Esophagus muscularis mucosa (tissue), 4 donors: ENCODE measurements at regions of chr12 and their contacts with region 1.

Region 1: DNA sequence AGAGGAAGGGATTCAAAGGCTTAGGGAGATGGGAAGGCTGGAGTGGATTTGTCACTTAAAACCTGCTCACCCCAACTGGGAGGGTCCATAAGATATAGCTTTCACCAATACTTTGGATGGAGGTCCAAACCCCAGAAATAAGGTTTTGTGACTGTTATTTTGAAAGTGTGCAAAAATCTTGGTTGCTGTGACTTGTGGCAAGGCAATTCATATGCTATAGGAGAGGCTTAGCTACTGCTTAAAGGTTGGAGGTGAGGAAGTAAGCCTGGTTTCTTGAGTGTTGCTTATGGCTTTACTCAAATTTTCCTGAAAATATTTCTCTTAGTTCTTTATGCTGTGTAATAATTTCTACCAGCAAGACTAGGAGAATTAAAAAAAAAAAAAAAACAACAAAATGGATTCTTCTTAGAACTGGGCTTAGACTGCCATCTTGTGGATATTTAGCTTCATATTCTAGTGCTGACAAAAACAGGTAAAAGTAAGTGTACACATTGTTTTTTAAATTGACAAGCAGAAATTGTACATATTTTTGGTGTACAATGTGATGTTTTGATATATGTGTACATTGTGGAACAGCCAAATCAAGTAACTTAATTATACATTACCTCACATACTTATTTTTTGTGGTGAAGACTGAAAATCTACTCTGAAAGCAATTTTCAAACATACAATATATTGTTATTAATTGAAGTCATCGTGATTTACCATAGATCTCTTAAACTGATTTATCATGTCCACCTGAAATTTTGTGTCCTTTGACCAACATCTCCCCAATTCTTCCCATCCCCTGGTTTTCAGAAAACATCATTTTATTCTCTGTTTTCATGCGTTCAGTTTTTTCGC is 23.0 kb downstream of the PDE6H start:
- DNase-seq: no peak
- H3K4me3 ChIP-seq: no peak overlapping the region
- H3K27ac ChIP-seq: peak overlapping the region; percentile 47 to 68 (median 56)
- H3K4me1 ChIP-seq: peaks cover 6 to 38% (median 29%) of the 10 kb centered on the region in 4 donors
- H3K27me3 ChIP-seq: no peaks in the 10 kb centered on the region
- CTCF ChIP-seq: peak; percentile 64 to 76 (median 69)
- EP300 ChIP-seq: no peak
- POLR2A ChIP-seq: no peak

Region 2: DNA sequence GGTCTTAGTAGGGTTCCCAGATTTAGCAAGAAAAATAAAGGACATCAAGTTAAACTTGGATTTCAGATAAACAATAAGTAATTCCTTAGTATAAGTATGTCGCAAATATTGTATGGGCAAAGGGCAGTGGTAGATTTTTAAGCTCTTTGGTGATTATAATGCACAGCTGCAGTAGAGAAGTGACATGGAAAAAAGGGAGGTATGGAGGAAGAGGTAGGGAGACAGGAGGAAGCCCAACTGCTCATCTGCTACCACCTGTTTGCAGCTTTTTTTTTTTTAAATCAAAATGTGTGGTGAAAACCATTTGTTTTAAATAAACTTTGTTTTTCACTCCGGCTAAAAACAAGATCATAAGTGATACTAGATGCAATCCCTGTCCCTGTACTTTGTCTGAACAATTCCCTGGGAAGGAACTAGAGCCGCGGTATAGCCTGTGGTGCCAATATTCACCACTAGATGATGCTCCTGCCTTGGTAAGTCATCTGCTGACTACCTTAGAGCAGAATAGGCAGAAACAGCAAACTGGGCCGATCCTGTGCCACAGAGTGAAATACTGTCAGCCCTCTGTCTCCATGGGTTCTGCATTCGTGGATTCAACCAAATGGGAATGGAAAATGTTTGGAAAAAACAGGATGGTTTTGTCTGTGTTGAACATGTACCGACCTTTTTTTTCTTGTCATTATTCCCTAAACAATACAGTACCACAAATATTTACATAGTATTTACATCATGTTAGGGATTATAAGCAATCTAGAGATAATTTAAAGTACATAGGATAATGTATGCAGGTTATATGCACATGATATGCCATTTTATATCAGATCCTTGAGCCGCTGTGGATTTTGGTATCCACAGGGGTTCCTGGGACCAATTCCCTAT is 365.7 kb before region 1 on chr12:
- intact Hi-C with region 1: loop called (anchors 5 kb)
- DNase-seq: no peak
- H3K4me3 ChIP-seq: no peak overlapping the region
- H3K27ac ChIP-seq: no peak overlapping the region
- H3K4me1 ChIP-seq: no peaks in the 10 kb centered on the region
- H3K27me3 ChIP-seq: no peaks in the 10 kb centered on the region
- CTCF ChIP-seq: peak; percentile 93 to 98 (median 95)
- EP300 ChIP-seq: no peak
- POLR2A ChIP-seq: no peak

Region 3: DNA sequence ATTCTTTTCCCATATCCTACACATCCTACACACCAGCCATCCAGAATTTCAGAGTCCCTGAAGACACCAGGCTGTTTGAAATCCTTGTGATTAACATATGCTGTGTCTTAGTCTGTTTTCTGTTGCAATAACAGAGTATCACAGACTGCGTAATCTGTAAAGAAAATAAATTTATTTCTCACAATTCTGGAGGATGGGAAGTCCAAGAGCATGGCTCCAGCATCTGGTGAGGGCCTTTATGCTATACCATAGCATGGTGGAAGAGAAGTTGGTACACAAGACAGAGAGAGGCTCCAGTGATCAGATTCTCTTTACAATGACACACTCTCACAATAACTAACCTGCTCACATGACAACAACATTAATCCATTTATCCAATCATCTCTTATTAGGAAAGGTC is 156.5 kb before region 1 on chr12:
- intact Hi-C with region 1: no loop called
- DNase-seq: no peak
- H3K4me3 ChIP-seq: no peak overlapping the region
- H3K27ac ChIP-seq: no peak overlapping the region
- H3K4me1 ChIP-seq: peaks cover 20 to 34% (median 28%) of the 10 kb centered on the region in 4 donors
- H3K27me3 ChIP-seq: no peaks in the 10 kb centered on the region
- CTCF ChIP-seq: no peak
- EP300 ChIP-seq: no peak
- POLR2A ChIP-seq: no peak

Region 4: GRCh38 chr12:14930299-14930698 is 65.5 kb before region 1 on chr12:
- intact Hi-C with region 1: loop called (anchors 5 kb)
- DNase-seq: no peak
- H3K4me3 ChIP-seq: no peak overlapping the region
- H3K27ac ChIP-seq: peak overlapping the region in 3 of 4 donors; percentile 33 to 66 (median 40)
- H3K4me1 ChIP-seq: peaks cover 12 to 40% (median 33%) of the 10 kb centered on the region in 4 donors
- H3K27me3 ChIP-seq: no peaks in the 10 kb centered on the region
- CTCF ChIP-seq: peak; percentile 45 to 56 (median 47)
- EP300 ChIP-seq: no peak
- POLR2A ChIP-seq: no peak

Region 5: DNA sequence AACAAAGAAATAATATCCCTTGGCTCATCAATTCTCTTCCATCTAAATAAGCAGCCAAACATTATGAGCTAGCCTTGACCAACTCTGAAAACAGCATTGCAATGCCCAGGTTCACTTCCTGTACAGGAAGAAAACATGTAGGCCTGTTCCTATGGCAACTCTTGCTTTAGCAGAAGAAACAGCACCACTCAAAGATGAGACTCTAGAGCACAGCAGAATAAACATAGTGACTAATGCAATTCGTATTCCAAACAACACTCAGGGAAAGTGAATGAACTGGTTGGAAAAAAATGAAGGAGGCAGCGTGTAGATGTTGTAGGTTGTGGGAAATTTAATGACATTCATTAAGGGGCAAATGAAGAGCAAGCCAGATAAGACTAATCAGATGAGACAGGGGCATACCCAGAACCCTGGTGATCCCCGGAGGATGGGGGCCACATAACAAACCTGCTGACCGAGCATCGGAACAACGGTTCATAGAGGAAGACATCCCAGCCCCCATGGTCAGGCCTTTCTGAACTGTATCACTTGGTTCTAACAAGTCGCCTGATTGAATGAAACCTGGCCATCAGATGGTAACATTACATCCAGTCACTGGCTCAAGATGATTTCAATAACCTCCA is 43.4 kb before region 1 on chr12:
- intact Hi-C with region 1: loop called (anchors 5 kb)
- DNase-seq: no peak
- H3K4me3 ChIP-seq: no peak overlapping the region
- H3K27ac ChIP-seq: peak overlapping the region; percentile 80 to 82 (median 82)
- H3K4me1 ChIP-seq: peaks cover 65 to 88% (median 79%) of the 10 kb centered on the region in 4 donors
- H3K27me3 ChIP-seq: no peaks in the 10 kb centered on the region
- CTCF ChIP-seq: no peak
- EP300 ChIP-seq: no peak
- POLR2A ChIP-seq: no peak

Region 6: DNA sequence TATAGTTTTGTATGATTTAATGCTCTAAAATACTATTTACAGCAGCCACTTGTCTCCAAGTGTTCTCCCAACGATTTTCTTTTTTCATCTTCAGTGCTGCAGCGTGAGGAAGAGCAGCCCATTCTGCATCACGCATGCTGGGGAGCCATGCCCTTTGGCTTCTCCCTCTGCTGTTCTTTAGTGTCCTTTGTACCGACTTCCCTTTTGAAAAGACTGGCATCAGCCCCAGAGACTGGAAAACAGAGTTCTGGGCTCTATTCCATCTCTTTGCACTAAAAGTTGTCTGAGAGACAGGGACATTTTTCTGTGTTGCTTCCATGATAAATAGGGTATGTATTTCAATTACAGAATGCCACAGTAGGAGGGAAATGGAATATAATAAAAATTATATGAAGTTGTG is 120.3 kb after region 1 on chr12:
- intact Hi-C with region 1: no loop called
- DNase-seq: no peak
- H3K4me3 ChIP-seq: no peak overlapping the region
- H3K27ac ChIP-seq: no peak overlapping the region
- H3K4me1 ChIP-seq: peaks cover 0 to 8% (median 5%) of the 10 kb centered on the region in 4 donors
- H3K27me3 ChIP-seq: no peaks in the 10 kb centered on the region
- CTCF ChIP-seq: no peak
- EP300 ChIP-seq: no peak
- POLR2A ChIP-seq: no peak